MCF 10A (cell line): ENCODE measurements at regions of chr7 and their contacts with region 1.

Region 1: GRCh38 chr7:150378853-150379440 is at the start of gene ZNF775:
- DNase-seq: peak; percentile 94
- H3K4me3 Mint-ChIP-seq: peak within 1 kb of the TSS; percentile 82
- H3K27ac Mint-ChIP-seq: peak within 1 kb of the TSS; percentile 62
- H3K4me1 Mint-ChIP-seq: peaks cover 27% of the 10 kb centered on the region
- H3K27me3 Mint-ChIP-seq: no peaks in the 10 kb centered on the region
- CTCF ChIP-seq: no peak
- total RNA-seq, gene ZNF775: 1.7 and 2.0 TPM in 2 replicates

Region 2: GRCh38 chr7:150368096-150368883 is 10.7 kb before region 1 on chr7 and contains the start of gene REPIN1:
- CTCF ChIA-PET with region 1: interaction called, 8 read pairs
- POLR2A ChIA-PET with region 1: interaction called, 49 read pairs
- intact Hi-C with region 1: loop called (anchors 1 kb)
- DNase-seq: peak; percentile 84
- H3K4me3 Mint-ChIP-seq: peak within 1 kb of the TSS; percentile 90
- H3K27ac Mint-ChIP-seq: peak within 1 kb of the TSS; percentile 89
- H3K4me1 Mint-ChIP-seq: no peaks in the 10 kb centered on the region
- H3K27me3 Mint-ChIP-seq: no peaks in the 10 kb centered on the region
- CTCF ChIP-seq: no peak
- total RNA-seq, gene REPIN1: 80.8 and 83.0 TPM in 2 replicates

Region 3: GRCh38 chr7:150481186-150481920 is 102.4 kb after region 1 on chr7:
- CTCF ChIA-PET with region 1: no interaction called
- POLR2A ChIA-PET with region 1: no interaction called
- intact Hi-C with region 1: no loop called
- DNase-seq: no peak
- H3K4me3 Mint-ChIP-seq: no peak overlapping the region
- H3K27ac Mint-ChIP-seq: no peak overlapping the region
- H3K4me1 Mint-ChIP-seq: peaks cover 14% of the 10 kb centered on the region
- H3K27me3 Mint-ChIP-seq: peaks cover 3% of the 10 kb centered on the region
- CTCF ChIP-seq: no peak

Region 4: DNA sequence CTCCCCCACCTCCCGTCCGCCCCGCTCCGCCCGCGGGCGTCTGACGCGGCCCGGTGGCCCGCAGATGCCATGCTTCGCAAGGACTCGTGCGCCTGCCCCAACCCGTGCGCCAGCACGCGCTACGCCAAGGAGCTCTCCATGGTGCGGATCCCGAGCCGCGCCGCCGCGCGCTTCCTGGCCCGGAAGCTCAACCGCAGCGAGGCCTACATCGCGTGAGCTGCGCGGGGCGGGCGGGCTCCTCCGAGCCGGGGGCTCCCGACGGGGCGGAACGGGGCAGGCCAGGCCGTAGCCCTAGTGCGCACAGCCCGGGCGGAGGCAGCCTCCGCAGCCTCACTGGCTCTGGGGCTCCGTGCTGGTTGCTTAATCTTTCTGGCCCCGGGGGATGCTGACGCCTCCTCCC is 672.2 kb after region 1 on chr7:
- CTCF ChIA-PET with region 1: no interaction called
- POLR2A ChIA-PET with region 1: no interaction called
- intact Hi-C with region 1: no loop called
- DNase-seq: peak; percentile 31
- H3K4me3 Mint-ChIP-seq: no peak overlapping the region
- H3K27ac Mint-ChIP-seq: no peak overlapping the region
- H3K4me1 Mint-ChIP-seq: peaks cover 10% of the 10 kb centered on the region
- H3K27me3 Mint-ChIP-seq: no peaks in the 10 kb centered on the region
- CTCF ChIP-seq: no peak